ENCODE measurements at regions of chr16 and their contacts with region 1.

Region 1: GRCh38 chr16:67561824-67562525 is 351 bp upstream of the CTCF start:
- DNase-seq: peak; percentile 96 to 100 (median 98)
- ATAC-seq: peak; percentile 91
- H3K4me3 ChIP-seq: peak overlapping the region; percentile 73 to 92
- H3K27ac ChIP-seq: peak overlapping the region; percentile 99 to 100
- H3K4me1 ChIP-seq: peaks cover 4 to 47% of the 10 kb centered on the region in 2 donors
- H3K27me3 ChIP-seq: no peaks in the 10 kb centered on the region
- CTCF ChIP-seq: no peak

Region 2: DNA sequence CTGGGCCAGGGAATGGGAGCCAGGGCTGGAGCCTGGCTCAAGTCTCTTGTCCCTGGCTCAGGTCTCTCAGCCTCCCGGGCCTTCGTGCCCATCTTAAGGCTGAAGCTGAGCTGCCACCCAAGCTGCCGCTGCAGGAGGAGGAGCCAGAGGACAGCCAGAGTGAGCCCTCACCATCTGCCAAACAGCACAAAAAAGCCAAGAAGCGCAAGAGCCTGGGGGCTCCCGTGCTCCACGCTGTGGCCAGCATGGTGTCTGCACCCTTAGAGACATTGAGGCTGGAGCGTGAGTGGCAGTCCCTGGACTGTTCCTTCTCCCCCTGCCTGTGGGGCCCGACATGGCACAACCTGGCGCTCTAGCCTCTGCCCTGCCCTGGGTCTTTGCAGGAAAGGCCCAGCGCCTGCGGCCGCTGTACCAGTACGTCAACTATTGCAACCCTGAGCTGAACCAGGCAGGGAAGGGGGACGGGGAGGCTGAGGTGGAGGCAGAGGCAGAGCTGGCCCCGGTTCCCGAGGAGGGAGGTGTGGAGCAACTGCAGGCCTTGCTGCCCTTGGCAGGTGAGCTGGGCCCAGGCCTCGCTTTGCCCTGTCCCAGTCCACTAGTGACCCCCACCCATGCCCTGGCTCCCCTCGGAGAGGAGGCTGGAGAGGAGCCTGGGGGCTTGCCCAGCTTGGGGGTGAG is 106.0 kb after region 1 on chr16:
- intact Hi-C with region 1: loop called in 1 of 2 experiments (anchors 5 kb)
- DNase-seq: peak; percentile 79 to 92 (median 87)
- ATAC-seq: peak; percentile 77
- H3K4me3 ChIP-seq: peak overlapping the region in 1 of 2 donors; percentile 86
- H3K27ac ChIP-seq: peak overlapping the region; percentile 86 to 91
- H3K4me1 ChIP-seq: peaks cover 22 to 50% of the 10 kb centered on the region in 2 donors
- H3K27me3 ChIP-seq: no peaks in the 10 kb centered on the region
- CTCF ChIP-seq: peak; percentile 62 to 81

Region 3: GRCh38 chr16:67781565-67781921 is 219.6 kb after region 1 on chr16:
- intact Hi-C with region 1: no loop called
- DNase-seq: no peak
- ATAC-seq: no peak
- H3K4me3 ChIP-seq: no peak overlapping the region
- H3K27ac ChIP-seq: no peak overlapping the region
- H3K4me1 ChIP-seq: peaks cover 0 to 33% of the 10 kb centered on the region in 2 donors
- H3K27me3 ChIP-seq: no peaks in the 10 kb centered on the region
- CTCF ChIP-seq: no peak

Region 4: GRCh38 chr16:67846320-67847063 is 284.5 kb after region 1 on chr16 and contains the start of gene NUTF2:
- intact Hi-C with region 1: no loop called
- DNase-seq: peak; percentile 95 to 97 (median 97)
- ATAC-seq: peak; percentile 86
- H3K4me3 ChIP-seq: peak within 1 kb of the TSS; percentile 98
- H3K27ac ChIP-seq: peak within 1 kb of the TSS; percentile 95 to 96
- H3K4me1 ChIP-seq: peaks cover 41 to 64% of the 10 kb centered on the region in 2 donors
- H3K27me3 ChIP-seq: no peaks in the 10 kb centered on the region
- CTCF ChIP-seq: no peak
- polyA plus RNA-seq, gene NUTF2: 108 to 123 (median 117) TPM

Measured in left lung (tissue), 14 donors.